K562 (cell line): ENCODE measurements at regions of chr1 and their contacts with region 1.

Region 1: DNA sequence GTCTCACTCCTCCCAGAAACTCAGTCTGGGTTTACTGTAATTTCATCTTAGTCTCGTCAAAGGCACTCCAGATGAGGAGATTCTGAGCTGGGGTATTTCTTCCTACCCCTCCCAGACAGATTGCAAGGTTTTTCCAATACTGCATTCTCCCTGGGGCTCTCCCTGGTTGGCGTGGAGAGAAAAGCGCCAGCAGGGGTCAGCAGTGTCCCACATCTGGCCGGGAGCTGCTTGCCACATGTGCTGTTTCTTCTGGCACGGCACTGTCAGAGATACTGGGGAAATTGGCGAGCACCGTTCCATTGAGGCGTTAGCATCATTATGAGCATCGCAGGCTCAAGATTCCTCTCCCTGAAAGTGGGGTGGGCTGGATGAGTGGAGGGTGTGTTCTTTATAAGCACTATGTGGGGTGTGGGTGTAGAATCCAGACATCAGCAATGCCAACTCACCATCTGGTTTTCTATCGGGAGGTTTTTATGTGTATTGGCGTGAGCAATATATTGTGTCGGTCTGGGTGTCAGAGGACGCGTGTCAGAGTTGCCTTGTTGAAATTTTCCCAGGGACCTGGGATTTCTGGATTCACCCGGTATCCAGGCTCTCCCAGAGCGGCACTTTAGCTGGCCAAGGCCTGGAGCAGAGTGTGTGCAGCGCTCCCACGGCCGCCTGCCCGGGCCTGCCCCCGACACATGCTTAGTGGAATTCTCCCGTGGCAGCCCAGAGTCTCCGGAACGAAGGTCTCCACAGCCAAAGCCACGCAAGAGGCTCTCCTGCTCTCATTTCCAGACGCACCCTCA is 8.0 kb upstream of the NAV1 start:
- DNase-seq: peak; percentile 76 to 88 (median 82)
- ATAC-seq: peak; percentile 98
- H3K4me3 ChIP-seq: no peak overlapping the region
- H3K27ac ChIP-seq: no peak overlapping the region
- H3K4me1 ChIP-seq: peaks cover 6 to 14% of the 10 kb centered on the region in 2 experiments
- H3K27me3 ChIP-seq: peaks cover 0 to 13% of the 10 kb centered on the region in 2 experiments; a peak in 3 of 5 replicates
- CTCF ChIP-seq: peak; percentile 95 to 98 (median 98)
- EP300 ChIP-seq: peak; percentile 41
- POLR2A ChIP-seq: no peak
- RAD21 ChIP-seq: peak; percentile 97 to 98

Region 2: DNA sequence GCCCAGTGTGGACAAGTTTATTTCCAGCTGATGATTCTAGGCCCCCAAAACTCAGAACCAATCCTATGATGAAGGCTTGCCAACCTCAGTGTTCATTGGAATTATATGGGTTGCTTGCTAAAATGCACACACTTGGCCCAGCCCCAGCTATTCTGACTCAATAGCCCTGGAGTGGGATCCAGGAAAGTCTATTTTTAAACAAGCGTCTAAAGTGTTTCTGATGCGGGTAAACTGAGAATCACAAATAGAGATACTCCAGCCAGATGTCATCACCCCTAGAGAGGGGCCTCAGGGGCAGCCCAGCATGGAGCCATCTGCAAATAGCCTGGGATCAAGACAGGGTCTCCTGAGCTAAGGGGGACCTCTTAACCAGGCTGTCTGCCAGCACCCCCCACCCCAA is 201.7 kb before region 1 on chr1:
- CTCF ChIA-PET with region 1: no interaction called
- POLR2A ChIA-PET with region 1: no interaction called
- in situ Hi-C with region 1: no loop called
- intact Hi-C with region 1: no loop called
- DNase-seq: no peak
- ATAC-seq: no peak
- H3K4me3 ChIP-seq: no peak overlapping the region
- H3K27ac ChIP-seq: no peak overlapping the region
- H3K4me1 ChIP-seq: no peaks in the 10 kb centered on the region
- H3K27me3 ChIP-seq: peaks cover 21 to 67% of the 10 kb centered on the region in 2 experiments
- CTCF ChIP-seq: no peak
- EP300 ChIP-seq: no peak
- POLR2A ChIP-seq: no peak
- RAD21 ChIP-seq: no peak

Region 3: DNA sequence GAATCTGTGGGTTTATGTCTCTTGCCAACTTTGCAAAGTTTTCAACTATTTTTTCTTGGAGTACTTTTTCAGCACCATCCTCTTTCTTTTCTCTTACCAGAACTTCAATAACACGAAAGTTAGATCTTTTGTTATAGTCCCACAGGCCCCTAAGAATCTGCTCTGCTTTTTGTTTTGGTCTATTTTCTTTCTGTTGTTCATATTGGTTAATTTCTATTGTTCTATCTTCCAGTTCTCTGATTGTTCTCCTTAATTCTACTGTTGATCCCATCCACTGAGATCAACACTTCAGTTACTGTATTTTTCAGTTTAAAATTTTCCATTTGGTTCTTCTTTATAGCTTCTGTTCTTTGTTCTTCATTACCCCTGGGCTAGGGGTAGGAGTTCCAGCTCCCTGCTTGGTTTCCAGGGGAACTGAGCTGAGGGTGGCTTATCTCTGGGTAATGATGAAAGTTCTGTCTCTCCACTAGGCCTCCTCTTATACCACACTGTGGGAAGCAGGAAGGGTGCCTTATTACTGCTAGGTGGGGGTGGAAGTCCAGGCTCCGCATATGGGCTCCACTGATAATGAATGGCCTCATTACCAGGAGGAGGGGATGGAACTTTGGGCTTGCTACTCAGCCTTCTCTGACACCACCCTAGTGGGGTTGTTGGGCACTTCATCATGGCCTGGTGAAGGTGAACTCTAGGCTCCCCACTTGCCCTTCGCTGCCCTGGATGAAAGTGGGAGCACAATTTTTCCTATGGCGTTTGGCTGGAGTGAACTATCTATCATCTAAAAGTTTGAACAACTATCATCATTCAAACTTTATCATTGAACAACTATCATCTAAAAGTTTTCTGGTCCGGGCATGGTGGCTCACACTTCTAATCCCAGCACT is 47.3 kb after region 1 on chr1:
- CTCF ChIA-PET with region 1: no interaction called
- POLR2A ChIA-PET with region 1: no interaction called
- in situ Hi-C with region 1: no loop called
- intact Hi-C with region 1: no loop called
- DNase-seq: peak; percentile 97 to 99 (median 98)
- ATAC-seq: peak; percentile 92
- H3K4me3 ChIP-seq: no peak overlapping the region
- H3K27ac ChIP-seq: peak overlapping the region; percentile 70
- H3K4me1 ChIP-seq: peaks cover 42 to 66% of the 10 kb centered on the region in 2 experiments
- H3K27me3 ChIP-seq: no peaks in the 10 kb centered on the region
- CTCF ChIP-seq: peak; percentile 60 to 71 (median 65)
- EP300 ChIP-seq: peak; percentile 98
- POLR2A ChIP-seq: 0 out of 2 replicates have a peak, but pooled peaks have one; percentile 20
- RAD21 ChIP-seq: peak; percentile 77 to 78

Region 4: GRCh38 chr1:201703621-201704439 is 172.9 kb after region 1 on chr1:
- CTCF ChIA-PET with region 1: interaction called, 27 read pairs
- POLR2A ChIA-PET with region 1: interaction called, 3 read pairs
- in situ Hi-C with region 1: no loop called
- intact Hi-C with region 1: loop called (anchors 1 kb)
- DNase-seq: peak; percentile 90 to 96 (median 94)
- ATAC-seq: peak; percentile 98
- H3K4me3 ChIP-seq: no peak overlapping the region
- H3K27ac ChIP-seq: no peak overlapping the region
- H3K4me1 ChIP-seq: peaks cover 11 to 15% of the 10 kb centered on the region in 2 experiments
- H3K27me3 ChIP-seq: peaks cover 0 to 4% of the 10 kb centered on the region in 2 experiments; a peak in 1 of 5 replicates
- CTCF ChIP-seq: peak; percentile 98 to 99 (median 99)
- EP300 ChIP-seq: peak; percentile 21; the same call in 1 of the 2 replicates
- POLR2A ChIP-seq: no peak
- RAD21 ChIP-seq: peak; percentile 100

Region 5: GRCh38 chr1:201792534-201793305 is 261.8 kb after region 1 on chr1:
- CTCF ChIA-PET with region 1: interaction called, 10 read pairs
- POLR2A ChIA-PET with region 1: interaction called, 5 read pairs
- in situ Hi-C with region 1: no loop called
- intact Hi-C with region 1: loop called (anchors 1 kb)
- DNase-seq: peak; percentile 80 to 86 (median 84)
- ATAC-seq: peak; percentile 98
- H3K4me3 ChIP-seq: no peak overlapping the region
- H3K27ac ChIP-seq: no peak overlapping the region
- H3K4me1 ChIP-seq: no peaks in the 10 kb centered on the region
- H3K27me3 ChIP-seq: no peaks in the 10 kb centered on the region; a peak in 1 of 5 replicates
- CTCF ChIP-seq: peak; percentile 95 to 99 (median 98)
- EP300 ChIP-seq: no peak
- POLR2A ChIP-seq: no peak
- RAD21 ChIP-seq: peak; percentile 97 to 99

Region 6: DNA sequence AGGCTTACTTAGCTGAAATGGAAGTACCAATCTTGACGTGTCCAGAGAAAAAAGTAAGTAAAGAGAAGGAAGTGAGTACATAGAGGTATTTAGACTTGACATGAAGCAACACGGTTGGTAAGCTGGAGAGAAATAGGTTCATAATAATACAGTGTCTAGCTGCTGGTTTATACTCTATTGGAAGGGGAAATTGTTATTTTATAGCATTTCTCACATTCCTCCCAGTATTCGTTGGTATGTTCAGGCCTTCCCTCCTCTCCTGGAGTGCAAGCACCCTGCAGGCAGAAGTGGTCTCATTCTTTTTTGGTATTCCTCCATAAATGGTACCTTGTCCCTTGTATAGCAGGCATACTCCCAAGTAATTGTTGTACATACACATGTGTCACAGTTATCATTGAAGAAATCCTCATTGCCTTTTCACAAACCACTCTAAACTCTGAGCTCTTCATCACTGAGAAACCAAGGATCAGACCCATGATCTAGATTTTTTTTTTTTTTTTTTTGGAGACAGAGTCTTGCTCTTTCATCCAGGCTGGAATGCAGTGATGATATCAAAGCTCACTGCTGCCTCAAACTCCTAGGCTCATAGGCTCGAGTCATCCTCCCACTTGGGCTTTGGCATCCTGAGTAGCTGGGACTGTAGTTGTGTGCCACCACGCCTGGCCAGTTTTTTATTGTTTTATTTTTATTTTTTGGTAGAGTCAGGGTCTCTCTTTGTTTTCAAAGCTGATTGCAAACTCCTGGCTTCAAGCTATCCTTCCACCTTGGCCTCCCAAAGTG is 288.2 kb after region 1 on chr1:
- CTCF ChIA-PET with region 1: no interaction called
- POLR2A ChIA-PET with region 1: no interaction called
- in situ Hi-C with region 1: no loop called
- intact Hi-C with region 1: no loop called
- DNase-seq: no peak
- ATAC-seq: no peak
- H3K4me3 ChIP-seq: no peak overlapping the region
- H3K27ac ChIP-seq: no peak overlapping the region
- H3K4me1 ChIP-seq: no peaks in the 10 kb centered on the region
- H3K27me3 ChIP-seq: no peaks in the 10 kb centered on the region
- CTCF ChIP-seq: no peak
- EP300 ChIP-seq: no peak
- POLR2A ChIP-seq: no peak
- RAD21 ChIP-seq: no peak

Region 7: DNA sequence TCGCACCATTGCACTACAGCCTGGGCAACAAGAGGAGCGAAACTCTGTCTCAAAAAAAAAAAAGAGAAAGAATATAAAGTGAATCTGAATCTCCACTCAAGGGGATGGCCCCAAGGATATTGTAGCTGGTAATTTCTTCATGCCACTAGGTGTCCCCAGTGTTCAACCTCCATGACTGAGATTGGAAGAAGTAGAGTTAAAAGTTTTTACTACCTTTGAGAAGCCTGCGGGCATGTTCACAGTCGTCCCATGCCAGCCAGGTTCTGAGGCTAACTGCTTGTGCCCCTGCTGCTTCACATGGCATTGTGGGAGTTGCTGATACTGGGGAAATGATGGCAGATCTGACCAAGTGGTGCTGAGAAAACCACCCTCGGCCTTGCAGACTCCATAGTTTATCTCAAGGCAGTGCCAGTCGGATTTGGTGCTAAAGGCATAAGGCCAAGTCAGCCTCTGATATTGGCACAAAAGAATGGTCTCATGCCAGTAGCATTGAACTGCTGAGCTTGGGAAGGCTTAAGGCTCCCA is 347.0 kb after region 1 on chr1:
- CTCF ChIA-PET with region 1: interaction called, 3 read pairs
- POLR2A ChIA-PET with region 1: interaction called, 3 read pairs
- in situ Hi-C with region 1: no loop called
- intact Hi-C with region 1: loop called (anchors 5 kb)
- DNase-seq: peak; percentile 55 to 73 (median 58)
- ATAC-seq: peak; percentile 81
- H3K4me3 ChIP-seq: no peak overlapping the region
- H3K27ac ChIP-seq: no peak overlapping the region
- H3K4me1 ChIP-seq: peaks cover 0 to 9% of the 10 kb centered on the region in 2 experiments; a peak in 3 of 5 replicates
- H3K27me3 ChIP-seq: no peaks in the 10 kb centered on the region
- CTCF ChIP-seq: peak; percentile 67 to 82 (median 76)
- EP300 ChIP-seq: no peak
- POLR2A ChIP-seq: peak; percentile 62
- RAD21 ChIP-seq: peak; percentile 27 to 75; a peak in 3 of 4 replicates